Right lobe of liver (tissue), 6 donors: ENCODE measurements at regions of chr7 and their contacts with region 1.

Region 1: DNA sequence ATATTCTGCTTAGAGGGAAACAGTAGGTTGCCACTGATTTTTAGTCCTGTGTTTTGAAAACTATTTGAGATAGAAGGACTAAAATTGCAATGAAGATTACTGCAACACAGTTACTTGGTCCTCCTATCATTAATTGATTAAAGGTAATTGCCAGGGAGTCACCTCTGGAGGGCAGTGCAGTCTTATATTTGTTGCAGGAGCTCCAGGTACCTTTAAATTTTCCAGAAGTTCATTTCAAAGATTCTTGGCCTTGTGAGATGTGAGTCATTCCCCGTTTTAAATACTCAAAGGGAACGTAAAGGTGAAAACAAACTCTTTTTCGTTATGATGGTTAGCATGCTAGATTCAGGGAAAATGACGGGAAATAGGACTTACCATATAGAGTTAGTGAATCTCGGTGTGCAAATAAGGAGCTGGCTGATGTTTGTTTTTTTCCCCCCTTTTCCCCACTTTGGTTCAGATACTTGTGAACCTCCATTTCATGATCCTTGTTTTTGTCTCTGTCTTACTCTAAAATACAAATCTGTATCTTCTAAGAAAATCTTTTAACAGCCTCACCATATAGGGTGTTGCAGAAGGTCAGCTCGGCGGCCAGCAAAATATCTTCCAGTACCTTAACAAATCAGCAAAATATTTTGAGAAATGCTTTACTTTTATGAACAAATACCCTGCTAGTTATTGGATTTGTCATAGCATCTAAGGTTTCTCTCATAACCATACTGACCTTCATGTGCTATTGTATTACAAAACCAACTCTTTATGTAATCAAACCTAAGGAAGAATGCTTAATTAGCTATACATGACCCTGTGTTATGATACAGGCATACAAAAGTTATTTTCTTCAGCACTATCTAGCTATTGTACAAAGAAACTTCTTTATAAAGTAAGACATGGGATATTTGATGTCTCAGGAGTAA is 143.0 kb upstream of the HDAC9 start:
- DNase-seq: peak in 1 of 3 donors; percentile 47
- ATAC-seq: peak; percentile 67 to 83 (median 73)
- H3K4me3 ChIP-seq: no peak overlapping the region
- H3K27ac ChIP-seq: no peak overlapping the region
- H3K4me1 ChIP-seq: no peaks in the 10 kb centered on the region
- H3K27me3 ChIP-seq: no peaks in the 10 kb centered on the region
- CTCF ChIP-seq: peak; percentile 56 to 65 (median 60)
- POLR2A ChIP-seq: no peak

Region 2: DNA sequence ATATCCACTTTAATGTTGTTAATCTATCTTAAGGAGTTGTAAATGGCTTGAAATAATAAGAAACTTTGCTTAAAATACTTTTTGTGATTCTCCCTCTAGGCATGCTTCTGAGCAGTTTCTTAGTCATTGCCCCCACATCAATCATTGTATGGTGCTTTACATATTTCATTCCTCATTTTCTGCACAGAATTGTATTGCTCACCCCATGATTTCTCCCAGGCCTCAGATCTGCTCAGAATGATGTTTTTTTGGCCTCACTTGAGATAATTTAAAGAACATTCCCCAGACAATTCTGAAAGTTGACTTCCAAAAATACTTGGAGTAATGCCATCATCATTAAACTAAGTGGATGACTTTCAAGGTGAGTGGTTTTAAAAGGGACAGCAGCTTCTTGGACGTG is 242.8 kb before region 1 on chr7:
- intact Hi-C with region 1: no loop called
- DNase-seq: no peak
- ATAC-seq: no peak
- H3K4me3 ChIP-seq: no peak overlapping the region
- H3K27ac ChIP-seq: no peak overlapping the region
- H3K4me1 ChIP-seq: no peaks in the 10 kb centered on the region
- H3K27me3 ChIP-seq: no peaks in the 10 kb centered on the region
- CTCF ChIP-seq: no peak
- POLR2A ChIP-seq: no peak

Region 3: GRCh38 chr7:18570890-18571478 is 218.4 kb after region 1 on chr7:
- intact Hi-C with region 1: loop called in 1 of 2 experiments (anchors 10 kb)
- DNase-seq: no peak
- ATAC-seq: peak in 2 of 4 donors; percentile 65 to 75
- H3K4me3 ChIP-seq: no peak overlapping the region
- H3K27ac ChIP-seq: no peak overlapping the region
- H3K4me1 ChIP-seq: no peaks in the 10 kb centered on the region
- H3K27me3 ChIP-seq: no peaks in the 10 kb centered on the region
- CTCF ChIP-seq: peak in 3 of 4 donors; percentile 44 to 55 (median 46)
- POLR2A ChIP-seq: no peak